CD4-positive, alpha-beta T cell (primary cell): ENCODE measurements at regions of chr11 and their contacts with region 1.

Region 1: GRCh38 chr11:65027213-65028067 is at the start of gene SNX15:
- DNase-seq: peak; percentile 73 to 97 (median 86)
- ATAC-seq: peak; percentile 94
- H3K4me3 ChIP-seq: peak within 1 kb of the TSS; percentile 53
- H3K4me3 Mint-ChIP-seq: peak within 1 kb of the TSS; percentile 73
- H3K27ac ChIP-seq: peak within 1 kb of the TSS; percentile 22 to 52
- H3K27ac Mint-ChIP-seq: peak within 1 kb of the TSS; percentile 82
- H3K4me1 ChIP-seq: peaks cover 22% of the 10 kb centered on the region
- H3K4me1 Mint-ChIP-seq: peaks cover 21% of the 10 kb centered on the region
- H3K27me3 ChIP-seq: no peaks in the 10 kb centered on the region
- H3K27me3 Mint-ChIP-seq: no peaks in the 10 kb centered on the region
- CTCF ChIP-seq: peak; percentile 86
- total RNA-seq, gene SNX15: 13.9 to 14.7 TPM

Region 2: DNA sequence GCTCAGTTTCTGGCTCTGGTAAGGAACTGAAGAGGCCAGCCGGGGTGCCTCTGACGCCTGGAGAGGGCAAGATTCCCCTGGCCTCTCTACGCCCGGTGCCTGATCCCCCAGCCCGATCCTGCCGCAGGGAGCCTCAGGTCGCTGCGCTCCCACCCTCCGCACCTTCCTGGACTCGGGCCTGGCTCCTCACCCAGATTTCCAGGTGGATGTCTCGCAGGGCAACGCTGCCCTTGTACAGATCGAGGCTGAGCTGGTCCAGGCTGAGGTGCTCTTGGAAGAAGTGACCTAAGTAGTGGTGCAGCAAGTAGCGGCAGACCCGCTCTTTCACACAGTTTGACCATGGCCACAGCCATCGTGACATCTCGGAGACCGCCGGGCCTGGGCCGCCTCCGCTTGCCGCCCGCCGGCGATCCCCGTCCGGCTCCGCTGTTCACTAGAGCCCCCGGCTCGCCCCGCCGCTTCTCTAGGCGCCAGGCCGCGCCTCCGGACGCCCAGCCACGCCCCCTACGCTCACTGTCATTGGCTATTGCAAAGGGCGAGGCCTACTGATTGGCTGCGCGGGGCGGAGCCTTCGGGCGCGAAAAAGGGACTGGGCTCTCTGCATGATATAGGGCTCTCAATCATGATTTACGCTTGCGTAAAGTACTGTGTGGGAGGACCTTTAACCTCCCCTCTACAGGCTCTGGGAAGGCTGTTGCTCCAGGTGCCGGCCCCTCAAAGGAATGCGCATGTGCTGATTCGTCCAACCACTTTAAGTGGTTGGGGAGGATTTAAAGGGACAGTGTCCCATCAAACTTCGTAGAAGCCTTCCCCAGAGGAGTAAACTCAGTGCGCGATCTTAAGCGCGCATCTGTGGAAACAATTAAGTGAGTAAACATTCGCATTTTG is 110.4 kb before region 1 on chr11 and contains the start of gene ATG2A:
- CTCF ChIA-PET with region 1: no interaction called
- POLR2A ChIA-PET with region 1: no interaction called
- intact Hi-C with region 1: loop called (anchors 1 kb)
- DNase-seq: peak; percentile 97 to 100 (median 99)
- ATAC-seq: peak; percentile 96
- H3K4me3 ChIP-seq: peak within 1 kb of the TSS; percentile 89
- H3K4me3 Mint-ChIP-seq: peak within 1 kb of the TSS; percentile 93
- H3K27ac ChIP-seq: peak within 1 kb of the TSS; percentile 66 to 78
- H3K27ac Mint-ChIP-seq: peak within 1 kb of the TSS; percentile 81
- H3K4me1 ChIP-seq: peaks cover 33% of the 10 kb centered on the region
- H3K4me1 Mint-ChIP-seq: peaks cover 26% of the 10 kb centered on the region
- H3K27me3 ChIP-seq: no peaks in the 10 kb centered on the region
- H3K27me3 Mint-ChIP-seq: no peaks in the 10 kb centered on the region
- CTCF ChIP-seq: no peak
- total RNA-seq, gene ATG2A: 189 to 198 TPM

Region 3: DNA sequence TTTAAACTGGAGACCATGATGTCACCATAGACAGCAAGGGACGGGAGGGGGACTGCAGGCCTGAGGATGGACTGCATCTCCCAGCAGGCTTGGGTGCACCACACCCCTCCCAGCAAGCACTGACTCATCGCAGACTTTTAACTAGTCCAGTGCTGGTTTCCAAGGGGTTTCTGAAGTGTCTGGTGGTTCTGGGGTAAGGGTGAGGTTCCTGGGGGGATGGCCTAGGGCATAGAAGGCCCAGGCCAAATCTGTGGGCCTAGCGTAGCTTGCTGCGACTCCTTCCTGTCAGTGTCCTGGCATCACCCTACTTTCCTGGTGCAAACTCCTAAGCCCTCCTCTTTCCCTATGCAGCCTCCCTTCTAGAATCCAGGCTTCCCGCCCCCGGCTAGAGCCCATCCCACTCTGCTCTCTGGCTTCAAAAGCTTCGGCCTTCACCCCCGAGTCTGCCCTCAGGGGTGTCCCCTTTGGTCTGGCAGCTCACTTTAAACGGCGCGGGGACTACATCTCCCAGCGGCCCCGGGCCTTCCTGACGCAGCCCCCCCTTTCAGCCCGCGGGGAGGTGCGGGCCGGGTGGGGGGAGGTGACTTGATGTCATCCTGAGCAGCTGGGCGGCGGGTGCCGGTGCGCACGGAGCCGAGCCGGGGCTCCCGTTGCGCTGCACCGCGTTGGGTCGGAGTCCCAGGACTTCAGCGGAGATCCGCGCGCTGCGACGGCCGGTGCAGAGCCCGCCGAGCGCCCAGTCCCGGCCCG is 103.2 kb before region 1 on chr11 and contains the start of gene PPP2R5B:
- CTCF ChIA-PET with region 1: no interaction called
- POLR2A ChIA-PET with region 1: interaction called, 4 read pairs
- intact Hi-C with region 1: loop called in 1 of 2 experiments (anchors 1 kb)
- DNase-seq: peak; percentile 79 to 95 (median 90)
- ATAC-seq: peak; percentile 92
- H3K4me3 ChIP-seq: peak within 1 kb of the TSS; percentile 69
- H3K4me3 Mint-ChIP-seq: peak within 1 kb of the TSS; percentile 95
- H3K27ac ChIP-seq: peak within 1 kb of the TSS; percentile 73 to 89
- H3K27ac Mint-ChIP-seq: peak within 1 kb of the TSS; percentile 97
- H3K4me1 ChIP-seq: peaks cover 30% of the 10 kb centered on the region
- H3K4me1 Mint-ChIP-seq: peaks cover 13% of the 10 kb centered on the region
- H3K27me3 ChIP-seq: no peaks in the 10 kb centered on the region
- H3K27me3 Mint-ChIP-seq: no peaks in the 10 kb centered on the region
- CTCF ChIP-seq: no peak
- total RNA-seq, gene PPP2R5B: 16.8 to 18.3 TPM

Region 4: GRCh38 chr11:65040847-65041621 is 13.6 kb after region 1 on chr11 and contains the start of gene SAC3D1:
- CTCF ChIA-PET with region 1: interaction called, 4 read pairs
- POLR2A ChIA-PET with region 1: interaction called, 11 read pairs
- intact Hi-C with region 1: loop called (anchors 1 kb)
- DNase-seq: peak; percentile 70 to 95 (median 80)
- ATAC-seq: peak; percentile 87
- H3K4me3 ChIP-seq: peak within 1 kb of the TSS; percentile 82
- H3K4me3 Mint-ChIP-seq: peak within 1 kb of the TSS; percentile 98
- H3K27ac ChIP-seq: peak within 1 kb of the TSS; percentile 56 to 84
- H3K27ac Mint-ChIP-seq: peak within 1 kb of the TSS; percentile 93
- H3K4me1 ChIP-seq: peaks cover 32% of the 10 kb centered on the region
- H3K4me1 Mint-ChIP-seq: peaks cover 20% of the 10 kb centered on the region
- H3K27me3 ChIP-seq: no peaks in the 10 kb centered on the region
- H3K27me3 Mint-ChIP-seq: no peaks in the 10 kb centered on the region
- CTCF ChIP-seq: no peak
- total RNA-seq, gene SAC3D1: 0.49 to 0.78 TPM

Region 5: DNA sequence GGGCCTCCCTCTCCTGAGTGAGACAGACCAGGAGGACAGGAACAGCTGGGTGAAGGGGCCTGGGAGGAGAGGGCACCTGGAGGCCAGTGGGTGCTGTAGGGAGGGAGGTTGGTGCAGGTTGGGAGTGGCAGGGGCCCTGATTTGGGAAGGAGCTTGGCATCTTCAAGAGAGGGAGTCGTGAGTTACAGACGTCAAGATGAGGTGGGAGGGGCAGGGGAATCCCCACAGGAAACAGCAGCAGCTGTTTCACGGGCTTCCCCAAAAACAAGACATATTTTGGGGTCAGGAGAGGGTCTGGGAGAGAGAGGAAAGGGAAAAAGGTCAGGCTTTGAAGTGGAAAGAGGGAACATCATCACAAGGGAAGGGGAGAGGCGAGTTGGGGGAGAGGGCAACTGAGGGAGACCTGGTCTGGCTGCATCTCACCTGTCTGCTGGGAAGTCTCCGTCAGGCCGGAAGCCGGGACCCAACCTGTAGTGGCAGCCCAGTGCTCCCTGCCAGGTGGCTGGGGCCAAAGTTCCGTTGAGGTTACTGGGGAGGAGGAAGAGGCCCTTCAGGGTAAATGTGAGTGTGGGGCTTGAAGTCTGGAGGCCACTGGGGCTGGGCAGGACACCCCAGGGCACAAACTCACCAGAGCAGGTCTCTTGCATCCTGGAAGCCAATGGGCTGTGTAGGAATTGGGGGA is 26.5 kb after region 1 on chr11:
- CTCF ChIA-PET with region 1: no interaction called
- POLR2A ChIA-PET with region 1: no interaction called
- intact Hi-C with region 1: no loop called
- DNase-seq: peak in 6 of 14 experiments; percentile 9 to 72 (median 45)
- ATAC-seq: peak; percentile 84
- H3K4me3 ChIP-seq: no peak overlapping the region
- H3K4me3 Mint-ChIP-seq: peak overlapping the region; percentile 14
- H3K27ac ChIP-seq: peak overlapping the region; percentile 4 to 24
- H3K27ac Mint-ChIP-seq: peak overlapping the region; percentile 69
- H3K4me1 ChIP-seq: peaks cover 16% of the 10 kb centered on the region
- H3K4me1 Mint-ChIP-seq: peaks cover 14% of the 10 kb centered on the region
- H3K27me3 ChIP-seq: no peaks in the 10 kb centered on the region
- H3K27me3 Mint-ChIP-seq: no peaks in the 10 kb centered on the region
- CTCF ChIP-seq: no peak

Region 6: DNA sequence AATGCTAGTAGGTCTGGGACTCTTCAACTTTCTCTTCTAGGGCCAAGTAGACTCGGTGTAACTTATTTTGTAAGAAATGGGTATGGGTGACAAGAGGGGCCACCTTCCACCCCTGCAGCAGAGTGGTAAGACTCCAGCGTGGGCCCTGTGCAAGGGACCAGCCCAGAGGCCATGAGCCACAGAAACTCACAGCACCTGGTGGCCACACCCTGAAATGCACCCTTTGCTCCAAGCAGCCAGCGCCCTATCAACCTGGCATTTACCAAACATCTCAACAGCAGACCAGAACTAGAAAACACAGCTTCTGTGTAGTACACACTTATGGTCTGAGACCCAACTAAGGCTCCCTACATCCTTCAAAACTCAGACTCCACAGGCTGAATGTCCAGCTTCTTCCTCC is 50.7 kb after region 1 on chr11:
- CTCF ChIA-PET with region 1: no interaction called
- POLR2A ChIA-PET with region 1: no interaction called
- intact Hi-C with region 1: loop called in 1 of 2 experiments (anchors 1 kb)
- DNase-seq: peak; percentile 60 to 87 (median 72)
- ATAC-seq: peak; percentile 100
- H3K4me3 ChIP-seq: no peak overlapping the region
- H3K4me3 Mint-ChIP-seq: peak overlapping the region; percentile 7
- H3K27ac ChIP-seq: no peak overlapping the region
- H3K27ac Mint-ChIP-seq: peak overlapping the region; percentile 37
- H3K4me1 ChIP-seq: peaks cover 13% of the 10 kb centered on the region
- H3K4me1 Mint-ChIP-seq: peaks cover 13% of the 10 kb centered on the region
- H3K27me3 ChIP-seq: no peaks in the 10 kb centered on the region
- H3K27me3 Mint-ChIP-seq: no peaks in the 10 kb centered on the region
- CTCF ChIP-seq: peak; percentile 71

Region 7: DNA sequence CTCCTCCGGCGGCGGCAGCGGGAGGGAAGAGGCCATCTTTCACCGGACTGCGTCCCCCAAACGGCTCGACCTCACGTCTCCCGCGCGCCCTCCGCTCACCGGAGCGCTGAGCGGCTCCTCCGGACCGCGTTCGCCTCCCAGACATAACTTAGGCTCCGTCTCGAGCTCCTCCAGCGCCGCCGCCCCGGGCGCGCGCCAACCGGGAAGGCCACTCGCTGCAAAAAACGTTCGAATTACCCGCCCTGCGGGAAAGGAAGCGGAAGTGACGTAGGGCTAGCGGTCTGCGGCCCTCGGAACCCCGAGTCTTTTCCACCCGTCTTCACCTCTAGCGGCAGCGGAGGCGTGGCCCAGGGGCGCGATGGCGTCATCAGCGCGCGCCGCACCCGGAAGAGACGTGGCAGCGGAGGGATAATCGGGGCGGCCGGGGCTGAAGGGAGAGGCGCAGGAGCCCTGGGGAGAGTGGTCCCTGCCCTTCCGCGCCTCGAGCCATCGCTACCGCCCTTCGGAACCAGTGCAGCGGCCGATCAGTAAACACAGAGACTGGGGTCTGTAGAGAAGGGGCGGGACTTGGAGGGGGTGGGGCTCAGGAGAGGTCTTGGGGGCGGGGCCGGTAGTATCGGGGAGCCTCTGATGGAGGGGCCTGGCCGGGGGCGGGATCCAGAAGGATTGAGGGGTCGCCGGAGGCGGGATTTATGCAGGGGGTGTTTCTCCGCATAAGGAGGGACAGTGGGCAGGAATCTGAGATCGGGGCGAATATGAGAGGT is 56.6 kb after region 1 on chr11 and contains the starts of genes CDCA5 and ZFPL1:
- CTCF ChIA-PET with region 1: no interaction called
- POLR2A ChIA-PET with region 1: no interaction called
- intact Hi-C with region 1: loop called in 1 of 2 experiments (anchors 1 kb)
- DNase-seq: peak; percentile 92 to 98 (median 95)
- ATAC-seq: peak; percentile 87
- H3K4me3 ChIP-seq: peak within 1 kb of the TSS; percentile 80
- H3K4me3 Mint-ChIP-seq: peak within 1 kb of the TSS; percentile 98
- H3K27ac ChIP-seq: peak within 1 kb of the TSS; percentile 86 to 97
- H3K27ac Mint-ChIP-seq: peak within 1 kb of the TSS; percentile 97
- H3K4me1 ChIP-seq: peaks cover 21% of the 10 kb centered on the region
- H3K4me1 Mint-ChIP-seq: peaks cover 33% of the 10 kb centered on the region
- H3K27me3 ChIP-seq: no peaks in the 10 kb centered on the region
- H3K27me3 Mint-ChIP-seq: no peaks in the 10 kb centered on the region
- CTCF ChIP-seq: no peak
- total RNA-seq, gene CDCA5: 0.77 to 0.84 TPM
- total RNA-seq, gene ZFPL1: 46.2 to 47.7 TPM